ENCODE measurements at regions of chr5 and their contacts with region 1.

Region 1: GRCh38 chr5:124343451-124343867 is 403.0 kb downstream of the ZNF608 start:
- DNase-seq: no peak
- ATAC-seq: no peak

Region 2: GRCh38 chr5:124402144-124402581 is 58.7 kb after region 1 on chr5:
- intact Hi-C with region 1: loop called (anchors 5 kb)
- DNase-seq: peak; percentile 73
- ATAC-seq: peak; percentile 88

Measured in Right ventricle myocardium inferior (tissue), 1 donor.